IMR-90 (cell line): ENCODE measurements at regions of chr3 and their contacts with region 1.

Region 1: DNA sequence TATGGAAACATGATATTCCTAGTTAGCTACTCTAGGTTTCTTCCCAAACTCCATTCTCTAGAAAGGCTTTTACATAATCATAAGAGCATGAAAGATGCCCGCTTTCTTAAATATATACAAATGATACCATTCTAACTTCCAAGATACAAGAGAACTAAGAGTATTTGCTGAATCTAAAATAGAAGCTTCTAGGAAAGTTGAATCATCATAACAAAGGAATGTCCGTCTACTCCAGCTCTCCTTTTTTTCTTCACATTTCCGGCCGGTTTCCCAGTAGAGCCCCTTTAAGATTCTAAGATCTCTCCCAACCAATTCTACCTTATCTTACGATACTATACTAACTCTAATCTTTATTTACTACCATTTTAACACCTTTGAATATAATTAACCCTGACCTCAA is 60.1 kb downstream of the RAD18 start:
- DNase-seq: peak; percentile 55
- ATAC-seq: peak; percentile 56
- H3K4me3 ChIP-seq: no peak overlapping the region
- H3K27ac ChIP-seq: no peak overlapping the region
- H3K4me1 ChIP-seq: peaks cover 6% of the 10 kb centered on the region
- H3K27me3 ChIP-seq: no peaks in the 10 kb centered on the region
- CTCF ChIP-seq: no peak
- POLR2A ChIP-seq: no peak
- RAD21 ChIP-seq: no peak

Region 2: DNA sequence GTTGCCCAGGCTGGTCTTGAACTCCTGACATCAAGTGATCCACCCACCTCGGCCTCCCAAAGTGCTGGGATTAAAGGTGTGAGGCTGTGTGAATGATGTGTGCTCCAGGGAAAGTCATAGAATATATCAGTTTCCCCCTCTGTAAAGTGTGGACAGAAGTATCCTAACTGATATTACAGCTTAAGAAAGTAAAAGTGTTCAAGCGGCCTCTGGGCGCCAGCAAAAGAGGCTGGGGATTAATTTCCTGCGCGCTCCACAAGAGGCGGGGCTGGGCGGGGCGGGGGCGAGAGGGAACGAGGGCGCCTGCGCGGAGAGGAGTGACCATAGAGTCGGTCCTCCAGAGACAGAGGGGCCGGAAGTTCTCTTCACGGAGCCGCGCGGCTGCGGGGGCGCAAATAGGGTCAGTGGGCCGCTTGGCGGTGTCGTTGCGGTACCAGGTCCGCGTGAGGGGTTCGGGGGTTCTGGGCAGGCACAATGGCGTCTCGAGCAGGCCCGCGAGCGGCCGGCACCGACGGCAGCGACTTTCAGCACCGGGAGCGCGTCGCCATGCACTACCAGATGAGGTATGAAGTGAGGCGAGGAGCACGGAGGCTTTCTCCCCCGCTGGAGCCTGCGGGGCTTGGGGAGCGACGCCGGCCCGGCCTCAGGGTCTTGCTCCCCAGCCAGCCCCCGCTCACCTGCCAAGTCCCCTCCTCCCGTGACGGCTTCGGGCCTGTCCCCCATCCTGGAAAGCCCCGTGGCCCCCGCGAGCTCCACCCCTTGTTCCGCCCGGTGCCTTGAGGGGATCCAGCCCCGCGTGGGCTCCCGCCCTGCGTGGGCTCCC is 987.3 kb after region 1 on chr3 and contains the start of gene JAGN1:
- CTCF ChIA-PET with region 1: no interaction called
- POLR2A ChIA-PET with region 1: interaction called, 14 read pairs
- dilution Hi-C with region 1: no loop called
- in situ Hi-C with region 1: no loop called
- intact Hi-C with region 1: no loop called
- DNase-seq: peak; percentile 83
- ATAC-seq: peak; percentile 94
- H3K4me3 ChIP-seq: peak within 1 kb of the TSS; percentile 79
- H3K27ac ChIP-seq: peak within 1 kb of the TSS; percentile 97
- H3K4me1 ChIP-seq: peaks cover 2% of the 10 kb centered on the region; the same call in 1 of the 2 replicates
- H3K27me3 ChIP-seq: no peaks in the 10 kb centered on the region
- CTCF ChIP-seq: no peak
- POLR2A ChIP-seq: peak; percentile 85
- RAD21 ChIP-seq: no peak
- total RNA-seq, gene JAGN1: 39.3 and 40.5 TPM in 2 replicates